Transverse colon (tissue), 4 donors: ENCODE measurements at regions of chr1 and their contacts with region 1.

Region 1: GRCh38 chr1:32939655-32940371 is 24.8 kb downstream of the RNF19B start:
- DNase-seq: peak; percentile 54
- H3K4me3 ChIP-seq: no peak overlapping the region
- H3K27ac ChIP-seq: peak overlapping the region; percentile 79 to 89 (median 86)
- H3K4me1 ChIP-seq: peaks cover 17 to 64% (median 48%) of the 10 kb centered on the region in 4 donors
- H3K27me3 ChIP-seq: no peaks in the 10 kb centered on the region
- CTCF ChIP-seq: no peak
- EP300 ChIP-seq: no peak
- POLR2A ChIP-seq: peak; percentile 29

Region 2: GRCh38 chr1:33007190-33008050 is 67.6 kb after region 1 on chr1:
- in situ Hi-C with region 1: loop called in 1 of 4 experiments (anchors 10 kb)
- intact Hi-C with region 1: no loop called
- DNase-seq: peak; percentile 28
- H3K4me3 ChIP-seq: no peak overlapping the region
- H3K27ac ChIP-seq: peak overlapping the region in 1 of 4 donors; percentile 73
- H3K4me1 ChIP-seq: peaks cover 10 to 36% (median 19%) of the 10 kb centered on the region in 4 donors
- H3K27me3 ChIP-seq: no peaks in the 10 kb centered on the region
- CTCF ChIP-seq: peak; percentile 26 to 50 (median 32)
- EP300 ChIP-seq: no peak
- POLR2A ChIP-seq: no peak

Region 3: GRCh38 chr1:33055210-33056008 is 115.6 kb after region 1 on chr1:
- in situ Hi-C with region 1: loop called in 1 of 4 experiments (anchors 25 kb)
- intact Hi-C with region 1: no loop called
- DNase-seq: peak; percentile 77
- H3K4me3 ChIP-seq: no peak overlapping the region
- H3K27ac ChIP-seq: peak overlapping the region; percentile 75 to 82 (median 79)
- H3K4me1 ChIP-seq: peaks cover 6 to 26% (median 19%) of the 10 kb centered on the region in 4 donors
- H3K27me3 ChIP-seq: no peaks in the 10 kb centered on the region
- CTCF ChIP-seq: peak; percentile 61 to 88 (median 72)
- EP300 ChIP-seq: no peak
- POLR2A ChIP-seq: no peak

Region 4: DNA sequence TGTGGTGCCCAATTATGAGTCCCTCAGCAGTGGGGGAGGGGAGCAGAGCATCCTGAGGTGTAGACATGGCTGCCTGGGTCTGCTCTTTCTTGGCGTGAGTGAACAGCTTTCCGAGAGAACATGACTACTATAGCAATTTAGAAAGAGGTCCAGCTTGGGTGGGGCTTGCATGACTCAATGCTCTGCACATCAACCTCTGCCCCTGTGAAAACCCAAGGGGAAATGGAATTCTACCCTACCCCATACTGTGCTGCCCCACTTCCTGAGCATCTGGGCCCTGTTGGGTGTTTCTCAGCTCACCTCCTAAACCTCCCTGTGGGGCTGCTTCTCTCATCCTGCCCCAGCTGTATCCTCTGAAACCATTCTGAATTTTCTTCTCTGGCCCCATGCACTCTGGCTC is 132.9 kb after region 1 on chr1:
- in situ Hi-C with region 1: loop called in 2 of 4 experiments (anchors 10 to 25 kb)
- intact Hi-C with region 1: no loop called
- DNase-seq: no peak
- H3K4me3 ChIP-seq: no peak overlapping the region
- H3K27ac ChIP-seq: no peak overlapping the region
- H3K4me1 ChIP-seq: no peaks in the 10 kb centered on the region
- H3K27me3 ChIP-seq: no peaks in the 10 kb centered on the region
- CTCF ChIP-seq: no peak
- EP300 ChIP-seq: no peak
- POLR2A ChIP-seq: no peak

Region 5: GRCh38 chr1:33161061-33161681 is 221.4 kb after region 1 on chr1:
- in situ Hi-C with region 1: no loop called
- intact Hi-C with region 1: no loop called
- DNase-seq: no peak
- H3K4me3 ChIP-seq: no peak overlapping the region
- H3K27ac ChIP-seq: no peak overlapping the region
- H3K4me1 ChIP-seq: peaks cover 0 to 12% (median 0%) of the 10 kb centered on the region in 4 donors
- H3K27me3 ChIP-seq: no peaks in the 10 kb centered on the region
- CTCF ChIP-seq: no peak
- EP300 ChIP-seq: no peak
- POLR2A ChIP-seq: no peak